Naive thymus-derived CD8-positive, alpha-beta T cell (primary cell): ENCODE measurements at regions of chr12 and their contacts with region 1.

Region 1: DNA sequence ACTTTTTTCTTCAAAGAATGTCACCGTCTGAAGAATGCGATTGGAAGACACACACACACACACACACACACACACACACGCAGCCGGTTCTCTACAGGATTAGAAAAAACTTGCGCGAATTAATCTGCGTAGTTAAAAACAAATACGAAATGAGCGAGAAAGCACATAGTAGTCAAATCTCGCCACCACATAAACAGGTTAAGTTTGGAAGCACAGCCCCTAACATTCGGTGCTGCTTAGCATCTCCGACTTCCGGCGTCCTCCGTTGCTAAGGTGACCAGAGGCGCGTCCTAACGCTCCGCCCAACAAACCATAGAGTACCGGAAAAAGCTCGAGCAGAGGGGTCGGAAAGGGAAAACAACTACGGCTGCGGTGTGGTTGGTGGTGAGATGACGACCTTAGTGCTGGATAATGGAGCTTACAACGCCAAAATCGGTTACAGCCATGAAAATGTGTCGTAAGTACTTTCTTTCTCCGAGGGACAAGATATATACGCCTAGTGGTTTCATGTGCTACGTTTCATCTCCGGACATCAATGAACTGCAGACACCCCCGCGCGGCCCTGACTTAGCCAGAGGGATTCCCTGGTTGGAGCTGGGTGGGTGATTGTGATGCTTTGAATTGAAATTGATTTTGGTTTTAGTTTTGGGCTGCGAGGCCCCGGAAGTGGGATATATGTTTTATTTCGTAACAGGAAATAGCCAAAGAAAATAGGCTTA is at the start of gene ACTR6:
- DNase-seq: peak; percentile 89 to 99 (median 98)
- ATAC-seq: peak; percentile 80 to 85
- H3K4me3 Mint-ChIP-seq: peak within 1 kb of the TSS; percentile 95 to 100 (median 98)
- H3K27ac Mint-ChIP-seq: peak within 1 kb of the TSS; percentile 98 to 100 (median 100)
- H3K4me1 Mint-ChIP-seq: peaks cover 11 to 45% (median 31%) of the 10 kb centered on the region in 4 donors
- H3K27me3 Mint-ChIP-seq: no peaks in the 10 kb centered on the region
- polyA plus RNA-seq, gene ACTR6: 37.4 to 46.7 (median 38.5) TPM

Region 2: GRCh38 chr12:100138048-100138802 is 62.4 kb before region 1 on chr12:
- POLR2A ChIA-PET with region 1: no interaction called
- DNase-seq: peak in 1 of 10 donors; percentile 14
- ATAC-seq: no peak
- H3K4me3 Mint-ChIP-seq: no peak overlapping the region
- H3K27ac Mint-ChIP-seq: peak overlapping the region in 5 of 10 donors; percentile 14 to 54 (median 19)
- H3K4me1 Mint-ChIP-seq: peaks cover 25 to 65% (median 54%) of the 10 kb centered on the region in 4 donors
- H3K27me3 Mint-ChIP-seq: no peaks in the 10 kb centered on the region

Region 3: DNA sequence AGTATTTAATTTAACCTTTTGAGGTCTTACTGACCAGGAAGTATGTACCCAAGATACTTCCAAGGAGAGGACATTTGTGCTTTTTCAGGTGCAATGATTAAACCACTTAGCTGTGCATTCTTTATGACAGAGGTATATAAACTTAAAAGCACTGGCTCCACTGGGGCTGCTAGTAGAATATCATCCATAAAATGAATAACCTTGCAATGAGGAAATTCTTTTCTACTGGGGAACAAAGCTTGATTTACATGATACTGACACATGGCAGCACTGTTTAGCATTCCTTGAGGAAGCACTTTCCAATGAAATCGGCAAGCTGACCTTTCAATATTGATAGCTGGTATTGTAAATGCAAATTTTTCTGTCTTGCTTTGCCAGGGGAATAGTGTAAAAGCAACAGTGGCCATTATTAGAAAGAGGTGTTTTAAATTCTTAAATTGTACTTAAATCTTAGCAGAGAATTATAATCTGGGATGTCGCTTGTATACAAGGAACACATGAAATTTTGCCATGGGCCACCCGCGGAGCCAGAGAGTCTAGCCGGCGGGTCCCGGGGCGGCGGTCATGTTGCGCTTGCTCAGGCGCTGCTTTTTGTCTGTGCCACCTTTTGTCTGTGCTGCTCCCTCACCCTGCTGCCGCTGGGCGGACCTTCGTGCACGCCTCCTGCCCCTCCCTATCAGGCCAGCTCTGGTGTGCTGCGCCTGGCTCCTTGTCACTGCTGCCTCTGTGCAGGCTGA is 37.0 kb before region 1 on chr12:
- POLR2A ChIA-PET with region 1: interaction called, 10 read pairs
- DNase-seq: peak; percentile 46 to 79 (median 61)
- ATAC-seq: peak; percentile 100
- H3K4me3 Mint-ChIP-seq: peak overlapping the region; percentile 62 to 79 (median 72)
- H3K27ac Mint-ChIP-seq: peak overlapping the region in 3 of 10 donors; percentile 22 to 83 (median 39)
- H3K4me1 Mint-ChIP-seq: peaks cover 0 to 11% (median 10%) of the 10 kb centered on the region in 4 donors
- H3K27me3 Mint-ChIP-seq: no peaks in the 10 kb centered on the region

Region 4: DNA sequence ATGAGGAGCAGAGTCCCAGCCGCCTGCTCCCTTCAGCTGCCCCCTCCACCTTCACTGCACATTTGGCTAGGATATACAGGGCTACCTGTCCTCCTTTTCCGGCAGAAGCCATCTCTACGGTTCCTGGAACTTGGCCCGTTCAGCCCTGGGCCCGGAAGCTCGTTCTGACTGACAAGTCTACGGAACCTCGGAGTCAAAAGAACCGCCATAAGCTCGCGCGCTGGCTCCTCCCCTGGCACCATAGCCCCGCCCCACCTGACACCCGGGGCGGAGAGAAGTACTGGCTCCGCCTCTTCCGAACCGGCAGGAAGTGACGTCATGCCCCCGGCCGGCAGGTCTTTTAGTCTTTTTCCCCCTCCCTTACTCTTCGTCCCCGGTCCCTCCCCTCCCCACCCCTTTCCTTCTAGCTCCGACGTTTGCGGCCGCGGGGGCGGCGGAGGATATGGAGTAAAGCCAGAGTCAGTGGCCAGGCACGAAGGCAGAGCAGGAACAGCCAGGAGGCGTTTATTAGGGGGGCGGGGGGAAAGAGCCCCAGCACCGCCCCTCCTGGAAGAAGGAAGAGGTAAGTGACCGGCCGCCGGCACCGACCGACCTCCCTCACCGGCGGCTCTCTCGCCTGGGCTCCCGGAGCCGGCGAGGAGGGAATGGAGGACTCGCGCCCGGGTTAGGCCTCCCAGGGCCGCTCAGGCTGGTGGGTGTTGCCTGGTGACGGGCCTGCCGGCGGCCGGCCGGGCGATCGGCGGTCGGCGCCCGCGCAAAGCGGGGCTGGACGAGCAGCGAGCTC is 66.4 kb after region 1 on chr12 and contains the starts of genes DEPDC4 and SCYL2:
- POLR2A ChIA-PET with region 1: interaction called, 50 read pairs
- DNase-seq: peak; percentile 87 to 99 (median 94)
- ATAC-seq: peak; percentile 89
- H3K4me3 Mint-ChIP-seq: peak within 1 kb of the TSS; percentile 96 to 100 (median 98)
- H3K27ac Mint-ChIP-seq: peak within 1 kb of the TSS; percentile 88 to 100 (median 99)
- H3K4me1 Mint-ChIP-seq: peaks cover 18 to 48% (median 39%) of the 10 kb centered on the region in 4 donors
- H3K27me3 Mint-ChIP-seq: no peaks in the 10 kb centered on the region
- polyA plus RNA-seq, gene DEPDC4: 1.0 to 1.6 (median 1.0) TPM
- polyA plus RNA-seq, gene SCYL2: 15.9 to 18.6 (median 17.9) TPM

Region 5: GRCh38 chr12:100279607-100280244 is 79.1 kb after region 1 on chr12:
- POLR2A ChIA-PET with region 1: no interaction called
- DNase-seq: no peak
- ATAC-seq: no peak
- H3K4me3 Mint-ChIP-seq: peak overlapping the region in 1 of 10 donors; percentile 7
- H3K27ac Mint-ChIP-seq: peak overlapping the region in 1 of 10 donors; percentile 28
- H3K4me1 Mint-ChIP-seq: peaks cover 14 to 37% (median 36%) of the 10 kb centered on the region in 4 donors
- H3K27me3 Mint-ChIP-seq: no peaks in the 10 kb centered on the region

Region 6: DNA sequence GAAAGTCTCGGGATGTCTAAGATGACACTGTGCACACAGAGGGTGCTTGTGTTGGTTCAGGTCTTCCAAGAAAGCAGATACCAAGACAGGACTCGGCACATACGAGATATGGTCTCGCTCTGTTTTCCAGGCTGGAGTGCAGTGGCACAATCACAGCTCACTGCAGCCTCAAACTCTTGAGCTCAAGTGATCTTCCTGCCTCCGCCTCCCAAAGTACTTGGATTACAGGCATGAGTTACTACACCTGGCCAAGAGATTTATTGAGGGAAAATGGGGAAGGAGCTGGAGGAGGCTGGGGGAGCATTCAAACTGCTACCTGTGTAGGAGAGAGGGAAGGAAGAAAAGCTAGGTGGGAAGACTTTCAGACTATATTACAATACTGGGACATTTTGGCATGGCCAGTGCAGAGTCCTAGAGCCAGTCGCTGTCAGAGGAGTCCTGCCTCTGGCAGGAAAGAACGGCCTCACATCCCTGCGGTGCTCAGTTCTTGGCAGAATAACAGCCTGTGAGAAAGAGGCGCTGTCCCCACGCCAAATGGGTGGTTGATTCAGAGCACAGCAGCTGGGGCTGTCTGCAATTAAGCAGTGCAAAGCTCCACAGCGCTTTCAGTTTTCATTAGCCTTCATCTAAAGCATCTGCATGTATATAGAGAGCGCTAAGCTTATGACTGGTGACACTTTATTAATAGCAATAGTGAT is 174.6 kb after region 1 on chr12:
- POLR2A ChIA-PET with region 1: no interaction called
- DNase-seq: no peak
- ATAC-seq: no peak
- H3K4me3 Mint-ChIP-seq: no peak overlapping the region
- H3K27ac Mint-ChIP-seq: no peak overlapping the region
- H3K4me1 Mint-ChIP-seq: no peaks in the 10 kb centered on the region
- H3K27me3 Mint-ChIP-seq: peaks cover 3 to 11% (median 6%) of the 10 kb centered on the region in 5 donors

Region 7: GRCh38 chr12:100460702-100461101 is 260.1 kb after region 1 on chr12:
- POLR2A ChIA-PET with region 1: no interaction called
- DNase-seq: no peak
- ATAC-seq: no peak
- H3K4me3 Mint-ChIP-seq: no peak overlapping the region
- H3K27ac Mint-ChIP-seq: no peak overlapping the region
- H3K4me1 Mint-ChIP-seq: no peaks in the 10 kb centered on the region
- H3K27me3 Mint-ChIP-seq: peaks cover 0 to 16% (median 2%) of the 10 kb centered on the region in 5 donors